ENCODE measurements at regions of chrX and their contacts with region 1.

Region 1: DNA sequence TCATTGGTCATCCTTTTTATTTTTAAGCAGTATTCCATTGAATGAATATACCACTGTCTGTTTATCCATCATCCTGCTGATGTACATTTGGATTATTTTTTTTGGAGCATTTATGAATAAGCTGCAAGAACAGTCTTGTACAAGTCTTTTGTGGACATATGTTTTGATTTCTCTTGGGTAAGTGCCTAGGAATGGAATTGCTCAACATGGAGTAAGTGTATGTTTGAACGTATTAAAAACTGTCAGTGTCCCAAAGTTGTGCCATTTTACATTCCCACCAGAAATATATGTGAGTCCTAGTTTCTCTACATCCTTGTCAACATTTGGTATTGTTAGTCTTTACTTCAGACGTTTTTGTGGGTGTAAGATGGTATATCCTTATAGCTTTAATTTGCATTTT is 287.0 kb upstream of the POF1B start:
- DNase-seq: no peak
- H3K4me3 ChIP-seq: no peak overlapping the region
- H3K27ac ChIP-seq: no peak overlapping the region
- H3K4me1 ChIP-seq: no peaks in the 10 kb centered on the region
- H3K27me3 ChIP-seq: no peaks in the 10 kb centered on the region
- CTCF ChIP-seq: no peak

Region 2: DNA sequence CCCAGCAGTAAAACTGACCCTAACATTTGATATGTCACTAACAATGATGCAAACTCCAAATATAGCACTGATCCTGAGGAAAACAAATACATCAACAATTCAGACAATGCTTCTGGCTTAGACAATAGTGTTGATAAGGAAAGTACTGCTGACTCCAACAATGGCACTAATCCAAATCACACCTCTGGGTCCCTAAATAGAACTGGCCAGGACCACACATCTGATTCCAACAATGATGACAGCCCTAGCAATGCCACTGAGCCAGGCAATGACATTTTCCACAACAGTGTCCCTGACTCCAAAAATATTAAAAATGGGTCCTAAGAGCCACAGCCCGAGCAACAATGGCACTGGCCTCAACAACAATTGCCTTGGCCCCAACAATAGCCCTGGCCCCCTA is 905.9 kb before region 1 on chrX:
- intact Hi-C with region 1: loop called (anchors 5 kb)
- DNase-seq: no peak
- H3K4me3 ChIP-seq: no peak overlapping the region
- H3K27ac ChIP-seq: no peak overlapping the region
- H3K4me1 ChIP-seq: no peaks in the 10 kb centered on the region
- H3K27me3 ChIP-seq: no peaks in the 10 kb centered on the region
- CTCF ChIP-seq: no peak

Region 3: DNA sequence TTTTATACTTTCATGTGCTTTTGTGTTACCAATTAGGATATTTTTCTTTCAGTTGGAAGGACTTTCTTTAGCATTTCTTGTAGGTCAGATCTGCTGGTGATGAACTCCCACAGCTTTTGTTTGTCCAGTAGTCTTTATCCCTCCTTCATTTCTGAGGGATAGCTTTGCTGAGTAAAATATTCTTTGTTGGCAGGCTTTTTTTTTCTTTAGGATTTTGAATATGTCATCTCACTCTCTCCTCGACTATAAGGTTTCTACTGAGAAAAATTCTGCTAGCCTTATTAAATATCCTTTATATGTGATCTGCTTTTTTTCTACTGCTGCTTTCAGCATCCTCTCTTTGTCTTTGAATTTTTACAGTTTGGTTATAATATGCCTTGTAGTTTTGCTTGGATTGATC is 237.4 kb before region 1 on chrX:
- intact Hi-C with region 1: no loop called
- DNase-seq: no peak
- H3K4me3 ChIP-seq: no peak overlapping the region
- H3K27ac ChIP-seq: no peak overlapping the region
- H3K4me1 ChIP-seq: no peaks in the 10 kb centered on the region
- H3K27me3 ChIP-seq: no peaks in the 10 kb centered on the region
- CTCF ChIP-seq: no peak

Region 4: GRCh38 chrX:85516131-85516530 is 150.3 kb before region 1 on chrX:
- intact Hi-C with region 1: no loop called
- DNase-seq: no peak
- H3K4me3 ChIP-seq: no peak overlapping the region
- H3K27ac ChIP-seq: no peak overlapping the region
- H3K4me1 ChIP-seq: no peaks in the 10 kb centered on the region
- H3K27me3 ChIP-seq: no peaks in the 10 kb centered on the region
- CTCF ChIP-seq: no peak

Region 5: DNA sequence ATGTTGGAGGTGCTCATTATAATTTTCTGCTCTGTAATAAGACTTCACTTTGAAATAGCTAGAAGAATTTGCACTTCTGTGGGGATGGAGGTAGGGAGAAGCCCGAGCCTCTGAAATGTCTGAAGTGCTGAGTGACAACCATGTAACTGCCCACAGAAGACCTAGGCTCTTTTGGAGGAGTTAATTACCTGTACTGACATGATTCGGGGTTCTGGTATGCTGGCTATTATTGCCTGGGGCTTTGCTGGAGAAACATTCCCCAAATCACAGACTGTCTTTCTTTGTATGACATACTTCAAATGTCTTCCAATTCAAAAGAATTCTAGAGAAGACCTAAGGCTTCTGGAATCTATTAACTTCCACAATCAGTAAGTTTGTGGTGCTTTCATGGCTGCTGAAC is 75.8 kb before region 1 on chrX:
- intact Hi-C with region 1: no loop called
- DNase-seq: no peak
- H3K4me3 ChIP-seq: no peak overlapping the region
- H3K27ac ChIP-seq: no peak overlapping the region
- H3K4me1 ChIP-seq: no peaks in the 10 kb centered on the region
- H3K27me3 ChIP-seq: no peaks in the 10 kb centered on the region
- CTCF ChIP-seq: no peak